CD14-positive monocyte (primary cell): ENCODE measurements at regions of chr3 and their contacts with region 1.

Region 1: DNA sequence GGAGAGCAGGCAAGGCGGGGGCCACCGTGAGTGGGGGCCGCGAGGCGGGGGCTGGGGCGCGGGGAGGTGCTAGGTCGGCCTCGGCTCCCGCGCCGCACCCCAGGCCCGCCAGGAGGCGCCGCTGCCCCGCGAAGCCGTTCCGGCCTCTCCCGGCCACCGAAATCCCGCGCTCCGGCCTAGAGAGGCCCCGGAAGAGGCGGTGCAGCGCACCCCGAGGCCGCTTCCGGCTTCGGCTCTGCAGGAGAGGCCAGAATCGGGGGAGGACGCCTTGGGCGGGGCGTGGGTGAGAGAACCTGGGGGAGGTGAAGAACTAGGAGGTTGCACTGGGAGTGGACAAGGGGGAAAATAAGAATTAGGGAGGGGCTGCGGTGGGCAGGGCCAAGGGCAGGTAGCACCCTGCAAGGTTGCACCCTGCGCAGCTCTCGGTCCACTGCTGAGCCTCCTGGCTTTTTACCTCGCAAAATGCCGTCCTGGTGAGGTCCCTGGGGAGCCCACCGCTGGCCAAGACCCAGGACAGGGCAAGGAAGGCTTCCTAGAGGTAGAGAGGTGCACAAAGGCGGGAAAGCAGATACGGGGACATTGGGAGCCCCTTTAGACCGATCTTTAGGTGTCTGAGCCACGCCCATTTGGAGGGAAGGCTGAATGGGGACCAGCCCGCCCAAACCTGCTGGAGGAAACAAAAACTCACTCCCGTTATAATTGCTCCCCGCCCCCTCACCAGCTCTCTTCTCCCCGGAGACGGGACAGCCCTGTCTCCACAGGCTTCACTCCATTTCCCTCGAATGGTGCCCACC is 8.4 kb upstream of the GNAI2 start:
- DNase-seq: peak; percentile 83 to 84 (median 84)
- H3K4me3 ChIP-seq: peak overlapping the region; percentile 73 to 95 (median 89)
- H3K4me3 Mint-ChIP-seq: peak overlapping the region; percentile 88 to 97
- H3K27ac ChIP-seq: peak overlapping the region; percentile 22 to 79
- H3K27ac Mint-ChIP-seq: peak overlapping the region; percentile 85 to 90 (median 88)
- H3K4me1 ChIP-seq: peaks cover 63 to 67% of the 10 kb centered on the region in 2 donors
- H3K4me1 Mint-ChIP-seq: peaks cover 60% of the 10 kb centered on the region
- H3K27me3 ChIP-seq: peaks cover 0 to 8% of the 10 kb centered on the region in 2 donors
- H3K27me3 Mint-ChIP-seq: peaks cover 19 to 27% (median 23%) of the 10 kb centered on the region in 3 donors
- CTCF ChIP-seq: peak; percentile 98

Region 2: DNA sequence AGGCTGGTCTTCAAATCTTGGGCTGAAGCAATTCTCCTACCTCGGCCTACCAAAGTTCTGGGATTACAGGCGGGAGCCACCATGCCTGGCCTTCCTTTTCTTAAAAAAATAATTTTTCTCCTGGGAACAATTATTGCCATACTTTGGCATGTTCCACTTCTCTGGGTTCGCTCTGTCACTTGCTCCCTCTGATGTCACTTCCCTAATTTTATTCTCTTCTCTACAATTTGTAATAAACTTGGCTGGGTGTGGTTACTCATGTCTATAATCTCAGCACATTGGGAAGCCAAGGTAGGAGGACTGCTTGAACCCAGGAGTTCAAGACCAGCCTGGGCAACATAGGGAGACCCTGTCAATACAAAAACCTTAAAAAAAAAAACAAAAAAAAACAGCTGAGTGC is 1192.3 kb before region 1 on chr3:
- intact Hi-C with region 1: loop called in 1 of 2 experiments (anchors 10 kb)
- DNase-seq: peak; percentile 34 to 57 (median 43)
- H3K4me3 ChIP-seq: no peak overlapping the region
- H3K4me3 Mint-ChIP-seq: no peak overlapping the region
- H3K27ac ChIP-seq: peak overlapping the region; percentile 27 to 68
- H3K27ac Mint-ChIP-seq: peak overlapping the region; percentile 80 to 92 (median 82)
- H3K4me1 ChIP-seq: peaks cover 11 to 12% of the 10 kb centered on the region in 2 donors
- H3K4me1 Mint-ChIP-seq: peaks cover 15% of the 10 kb centered on the region
- H3K27me3 ChIP-seq: no peaks in the 10 kb centered on the region
- H3K27me3 Mint-ChIP-seq: no peaks in the 10 kb centered on the region
- CTCF ChIP-seq: no peak

Region 3: DNA sequence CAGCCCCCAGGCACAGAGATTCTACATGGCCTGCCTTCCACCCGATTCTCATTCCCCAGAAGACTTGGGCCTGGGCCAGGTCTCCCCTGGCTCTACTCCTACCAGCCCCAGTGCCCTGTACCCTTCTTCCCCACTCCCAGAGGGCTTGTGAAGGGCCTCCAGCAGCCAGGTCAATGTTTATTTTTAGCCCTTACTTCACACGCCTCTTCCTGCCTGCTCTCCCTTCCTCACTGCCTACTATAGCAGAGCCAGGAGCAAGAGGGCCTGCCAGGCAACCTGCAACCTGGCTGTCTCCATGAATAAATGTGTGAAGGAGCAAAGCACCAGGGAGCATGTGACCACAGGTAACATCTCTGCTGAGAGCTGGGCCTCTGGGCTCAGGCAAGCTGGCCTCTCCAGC is 579.8 kb before region 1 on chr3:
- intact Hi-C with region 1: no loop called
- DNase-seq: no peak
- H3K4me3 ChIP-seq: no peak overlapping the region
- H3K4me3 Mint-ChIP-seq: no peak overlapping the region
- H3K27ac ChIP-seq: no peak overlapping the region
- H3K27ac Mint-ChIP-seq: no peak overlapping the region
- H3K4me1 ChIP-seq: no peaks in the 10 kb centered on the region
- H3K4me1 Mint-ChIP-seq: no peaks in the 10 kb centered on the region
- H3K27me3 ChIP-seq: no peaks in the 10 kb centered on the region
- H3K27me3 Mint-ChIP-seq: peaks cover 0 to 5% (median 0%) of the 10 kb centered on the region in 3 donors
- CTCF ChIP-seq: no peak

Region 4: DNA sequence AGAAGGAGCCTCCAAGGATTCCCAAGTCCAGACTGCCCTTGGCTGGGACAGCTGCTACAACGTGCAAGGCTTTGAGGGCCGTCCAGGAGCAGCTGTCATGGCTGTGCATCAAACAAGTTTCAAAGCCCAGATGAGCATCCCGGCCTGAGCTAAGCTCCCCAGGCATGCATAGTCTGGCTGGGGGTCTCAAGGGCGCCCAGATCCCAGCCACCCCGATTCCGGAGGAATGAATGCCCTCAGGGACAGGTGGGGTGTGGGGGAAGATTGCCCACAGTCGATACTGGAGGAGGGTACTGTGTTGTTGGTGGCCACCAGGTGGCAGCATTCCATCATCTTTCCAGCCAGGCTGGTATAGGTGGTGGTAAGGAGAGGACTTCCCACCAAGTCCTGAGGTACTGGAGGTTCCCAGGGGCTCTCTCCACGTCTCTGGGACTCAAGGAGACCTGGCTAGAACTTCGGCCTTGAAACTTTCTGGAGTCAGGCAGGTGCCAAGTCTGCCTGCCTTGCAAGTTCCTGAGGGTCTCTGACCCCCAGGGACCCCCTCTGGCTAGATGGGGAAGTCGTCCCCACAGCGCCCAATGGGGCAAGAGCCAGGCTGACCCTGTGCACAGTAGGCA is 106.1 kb before region 1 on chr3:
- intact Hi-C with region 1: loop called (anchors 1 to 5 kb)
- DNase-seq: peak; percentile 56 to 68 (median 61)
- H3K4me3 ChIP-seq: no peak overlapping the region
- H3K4me3 Mint-ChIP-seq: no peak overlapping the region
- H3K27ac ChIP-seq: peak overlapping the region in 1 of 2 donors; percentile 6
- H3K27ac Mint-ChIP-seq: peak overlapping the region in 1 of 7 donors; percentile 45
- H3K4me1 ChIP-seq: no peaks in the 10 kb centered on the region
- H3K4me1 Mint-ChIP-seq: no peaks in the 10 kb centered on the region
- H3K27me3 ChIP-seq: no peaks in the 10 kb centered on the region
- H3K27me3 Mint-ChIP-seq: peaks cover 0 to 4% (median 2%) of the 10 kb centered on the region in 3 donors
- CTCF ChIP-seq: peak; percentile 88

Region 5: GRCh38 chr3:50192689-50193141 is 34.9 kb before region 1 on chr3:
- intact Hi-C with region 1: loop called (anchors 1 to 2 kb)
- DNase-seq: peak; percentile 44 to 70 (median 62)
- H3K4me3 ChIP-seq: no peak overlapping the region
- H3K4me3 Mint-ChIP-seq: peak overlapping the region in 1 of 2 donors; percentile 55
- H3K27ac ChIP-seq: no peak overlapping the region
- H3K27ac Mint-ChIP-seq: peak overlapping the region in 1 of 7 donors; percentile 50
- H3K4me1 ChIP-seq: peaks cover 25 to 37% of the 10 kb centered on the region in 2 donors
- H3K4me1 Mint-ChIP-seq: peaks cover 27% of the 10 kb centered on the region
- H3K27me3 ChIP-seq: peaks cover 15 to 37% of the 10 kb centered on the region in 2 donors
- H3K27me3 Mint-ChIP-seq: peaks cover 36 to 47% (median 44%) of the 10 kb centered on the region in 3 donors
- CTCF ChIP-seq: peak; percentile 97

Region 6: DNA sequence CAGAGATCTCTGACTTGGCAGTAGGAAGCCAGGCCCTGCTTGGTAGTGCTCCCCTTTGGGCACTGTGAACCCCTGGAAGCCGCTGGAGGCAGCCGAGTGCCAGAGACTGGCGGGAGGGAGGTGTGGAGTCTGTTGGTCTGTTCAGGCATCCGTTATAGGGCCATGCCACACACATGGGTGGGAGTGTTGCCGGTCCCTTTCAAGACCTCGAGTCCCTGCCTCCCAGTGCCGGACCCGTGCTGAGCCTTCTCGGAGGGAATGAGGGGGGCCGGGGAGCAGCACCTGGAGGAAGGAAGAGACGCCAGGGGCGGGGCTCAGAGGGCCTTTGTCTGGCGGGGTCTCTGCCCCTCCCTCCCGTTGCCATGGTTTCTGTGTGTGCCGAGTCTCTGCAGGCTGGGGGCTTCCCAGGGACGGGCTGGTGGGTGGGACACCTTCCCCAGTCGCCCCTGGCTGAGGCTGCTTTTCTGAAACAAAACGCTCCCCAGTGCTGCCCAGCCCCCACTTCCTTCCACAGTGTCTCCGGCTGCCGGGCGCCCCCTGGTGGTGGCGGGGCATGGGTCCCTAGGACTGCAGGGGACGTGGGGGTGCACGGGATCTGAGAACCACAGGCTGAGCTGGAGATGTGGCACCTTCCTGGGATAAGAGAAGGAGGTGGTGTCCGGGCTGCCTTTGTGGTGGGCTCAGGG is 18.4 kb after region 1 on chr3:
- intact Hi-C with region 1: loop called (anchors 1 kb)
- DNase-seq: peak; percentile 83 to 89 (median 84)
- H3K4me3 ChIP-seq: peak overlapping the region; percentile 22 to 73 (median 28)
- H3K4me3 Mint-ChIP-seq: peak overlapping the region; percentile 74 to 88
- H3K27ac ChIP-seq: peak overlapping the region; percentile 98 to 100
- H3K27ac Mint-ChIP-seq: peak overlapping the region; percentile 96 to 98 (median 98)
- H3K4me1 ChIP-seq: peaks cover 88 to 91% of the 10 kb centered on the region in 2 donors
- H3K4me1 Mint-ChIP-seq: peaks cover 88% of the 10 kb centered on the region
- H3K27me3 ChIP-seq: no peaks in the 10 kb centered on the region
- H3K27me3 Mint-ChIP-seq: peaks cover 0 to 3% (median 0%) of the 10 kb centered on the region in 3 donors
- CTCF ChIP-seq: peak; percentile 99

Region 7: DNA sequence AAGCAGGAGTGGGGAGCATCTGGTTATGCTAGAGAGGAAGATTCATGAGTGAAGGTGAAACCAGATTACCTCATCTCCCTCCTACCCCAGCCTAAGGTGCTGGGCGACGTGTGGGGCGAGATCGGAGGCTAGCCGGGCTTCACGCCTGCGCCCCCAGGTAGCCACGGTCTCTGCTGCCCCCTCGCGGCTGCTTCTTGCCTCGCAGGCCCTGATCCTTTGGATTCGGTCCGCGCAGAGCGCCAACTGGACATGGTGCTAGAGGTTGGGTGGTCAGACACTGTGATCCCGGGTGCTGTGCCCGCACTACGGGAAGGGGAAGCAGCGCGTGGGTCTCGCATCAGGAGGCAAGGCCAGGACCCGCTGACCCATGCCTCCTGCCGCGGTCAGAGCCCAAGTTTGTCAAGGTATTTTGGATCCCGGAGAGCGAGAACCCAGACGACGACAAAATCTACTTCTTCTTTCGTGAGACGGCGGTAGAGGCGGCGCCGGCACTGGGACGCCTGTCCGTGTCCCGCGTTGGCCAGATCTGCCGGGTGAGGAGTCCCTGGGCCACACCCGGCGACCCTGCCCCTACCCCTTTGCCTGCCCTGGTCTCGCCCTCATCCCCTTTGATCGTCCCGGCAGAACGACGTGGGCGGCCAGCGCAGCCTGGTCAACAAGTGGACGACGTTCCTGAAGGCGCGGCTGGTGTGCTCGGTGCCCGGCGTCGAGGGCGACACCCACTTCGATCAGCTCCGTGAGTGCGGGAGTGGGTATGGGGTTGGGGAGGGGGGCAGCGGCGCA is 45.5 kb after region 1 on chr3:
- intact Hi-C with region 1: loop called (anchors 1 kb)
- DNase-seq: peak; percentile 81 to 87 (median 85)
- H3K4me3 ChIP-seq: peak overlapping the region; percentile 16 to 72 (median 32)
- H3K4me3 Mint-ChIP-seq: peak overlapping the region; percentile 82 to 93
- H3K27ac ChIP-seq: peak overlapping the region in 1 of 2 donors; percentile 20
- H3K27ac Mint-ChIP-seq: peak overlapping the region in 4 of 7 donors; percentile 43 to 86 (median 77)
- H3K4me1 ChIP-seq: peaks cover 16 to 34% of the 10 kb centered on the region in 2 donors
- H3K4me1 Mint-ChIP-seq: peaks cover 26% of the 10 kb centered on the region
- H3K27me3 ChIP-seq: peaks cover 24 to 47% of the 10 kb centered on the region in 2 donors
- H3K27me3 Mint-ChIP-seq: peaks cover 51 to 66% (median 64%) of the 10 kb centered on the region in 3 donors
- CTCF ChIP-seq: peak; percentile 96